CD4-positive, alpha-beta T cell (primary cell): ENCODE measurements at regions of chr4 and their contacts with region 1.

Region 1: DNA sequence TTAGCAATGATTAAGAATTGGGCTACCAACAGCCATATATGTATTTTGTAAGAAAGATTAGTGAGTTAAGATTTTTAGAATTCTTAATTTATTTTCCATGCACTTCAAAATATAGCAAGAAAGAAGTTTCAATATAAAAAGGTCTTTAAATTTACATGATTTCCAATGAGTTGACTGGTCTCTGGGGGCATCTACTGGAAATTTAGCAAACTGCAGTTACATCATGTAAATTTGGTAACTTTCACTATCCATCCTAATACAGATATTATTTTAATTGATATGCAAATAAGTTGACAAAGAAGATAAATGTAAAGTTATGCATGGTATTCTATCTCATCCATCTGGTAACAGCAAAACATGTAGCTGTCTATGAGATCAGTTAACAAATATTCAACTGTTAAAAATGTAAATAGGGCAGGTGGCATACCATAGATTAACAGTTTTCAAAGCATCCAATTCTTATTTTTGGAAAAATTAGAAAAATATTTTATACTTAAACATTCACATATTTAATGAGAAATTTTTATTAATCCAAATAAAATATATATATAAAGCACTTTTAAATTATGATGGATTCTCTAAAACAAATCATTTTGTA is 29.1 kb downstream of the TTC29 start:
- DNase-seq: peak in 4 of 14 experiments; percentile 7 to 48 (median 40)
- ATAC-seq: no peak
- H3K4me3 ChIP-seq: no peak overlapping the region
- H3K4me3 Mint-ChIP-seq: no peak overlapping the region
- H3K27ac ChIP-seq: no peak overlapping the region
- H3K27ac Mint-ChIP-seq: no peak overlapping the region
- H3K4me1 ChIP-seq: no peaks in the 10 kb centered on the region
- H3K4me1 Mint-ChIP-seq: no peaks in the 10 kb centered on the region
- H3K27me3 ChIP-seq: peaks cover 0 to 15% of the 10 kb centered on the region in 2 experiments
- H3K27me3 Mint-ChIP-seq: peaks cover 7% of the 10 kb centered on the region
- CTCF ChIP-seq: peak; percentile 45

Region 2: DNA sequence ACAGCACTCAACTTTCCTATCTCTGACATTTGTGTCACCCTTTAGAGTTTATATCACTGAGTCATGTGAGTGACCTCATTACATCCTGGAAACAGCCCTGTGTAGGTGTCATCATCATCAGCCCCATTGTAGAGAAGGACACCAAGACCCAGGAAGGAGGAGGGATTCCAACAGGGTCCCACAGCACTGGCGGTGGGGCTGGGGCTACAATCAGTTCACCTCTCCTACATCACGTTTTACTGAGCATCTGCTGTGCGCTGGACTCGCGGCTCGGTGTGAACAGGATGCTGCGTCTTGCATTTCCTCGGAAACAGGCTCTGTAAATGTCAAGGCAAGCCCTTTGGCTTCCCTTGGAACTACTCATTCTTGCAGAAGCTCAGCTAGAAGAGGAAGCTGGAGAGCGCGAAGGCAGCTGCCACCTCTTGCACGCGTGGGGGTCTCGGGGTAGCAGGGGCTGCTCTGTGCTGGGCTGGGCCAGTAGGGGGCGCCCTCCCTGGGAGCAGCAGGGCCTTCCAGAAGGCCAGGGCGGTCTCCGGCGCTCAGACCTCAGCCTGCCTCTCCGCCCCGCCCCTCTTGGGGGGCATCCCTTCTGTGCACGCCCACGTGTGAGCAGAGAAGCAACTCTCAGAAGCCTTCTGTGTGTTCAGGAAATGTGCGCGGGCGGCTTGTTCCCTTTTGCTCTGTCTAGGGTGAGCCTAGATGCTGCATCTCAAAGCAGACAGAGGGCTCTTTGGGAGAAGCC is 673.3 kb before region 1 on chr4:
- CTCF ChIA-PET with region 1: no interaction called
- POLR2A ChIA-PET with region 1: no interaction called
- intact Hi-C with region 1: loop called (anchors 1 to 2 kb)
- DNase-seq: peak in 11 of 14 experiments; percentile 13 to 60 (median 29)
- ATAC-seq: peak; percentile 66
- H3K4me3 ChIP-seq: peak overlapping the region; percentile 18
- H3K4me3 Mint-ChIP-seq: peak overlapping the region; percentile 56
- H3K27ac ChIP-seq: no peak overlapping the region
- H3K27ac Mint-ChIP-seq: no peak overlapping the region
- H3K4me1 ChIP-seq: peaks cover 14% of the 10 kb centered on the region
- H3K4me1 Mint-ChIP-seq: peaks cover 20% of the 10 kb centered on the region
- H3K27me3 ChIP-seq: no peaks in the 10 kb centered on the region
- H3K27me3 Mint-ChIP-seq: peaks cover 10% of the 10 kb centered on the region
- CTCF ChIP-seq: peak; percentile 49

Region 3: DNA sequence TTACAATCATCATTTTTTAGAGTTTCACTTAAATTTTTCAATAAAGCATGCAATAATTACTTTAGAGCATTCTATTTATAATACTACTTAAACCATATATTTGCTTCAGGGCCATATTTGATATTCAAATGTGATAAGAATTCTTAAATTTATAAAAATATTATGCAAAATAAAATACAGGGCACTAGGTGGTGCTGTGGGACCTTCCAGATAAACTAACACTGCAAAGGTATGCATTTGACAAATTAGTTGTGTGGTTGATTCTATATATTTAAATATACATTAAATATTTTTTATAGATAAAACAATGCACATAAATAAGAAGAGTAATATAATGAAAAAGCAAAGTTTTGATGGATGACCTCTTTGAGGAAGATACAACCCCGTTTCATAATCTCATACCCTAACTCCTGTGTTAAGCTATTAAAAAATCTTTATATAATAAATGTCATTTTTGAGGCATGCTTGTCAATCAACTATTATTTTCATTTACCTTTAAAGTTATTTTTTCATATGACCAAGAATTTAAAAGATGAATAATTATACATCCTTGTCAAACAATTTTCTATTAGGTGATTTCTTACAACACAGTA is 573.9 kb before region 1 on chr4:
- CTCF ChIA-PET with region 1: no interaction called
- POLR2A ChIA-PET with region 1: no interaction called
- intact Hi-C with region 1: loop called (anchors 1 to 5 kb)
- DNase-seq: peak in 8 of 14 experiments; percentile 0 to 59 (median 24)
- ATAC-seq: no peak
- H3K4me3 ChIP-seq: no peak overlapping the region
- H3K4me3 Mint-ChIP-seq: no peak overlapping the region
- H3K27ac ChIP-seq: no peak overlapping the region
- H3K27ac Mint-ChIP-seq: no peak overlapping the region
- H3K4me1 ChIP-seq: no peaks in the 10 kb centered on the region
- H3K4me1 Mint-ChIP-seq: peaks cover 5% of the 10 kb centered on the region
- H3K27me3 ChIP-seq: no peaks in the 10 kb centered on the region
- H3K27me3 Mint-ChIP-seq: no peaks in the 10 kb centered on the region
- CTCF ChIP-seq: peak; percentile 73

Region 4: GRCh38 chr4:146738596-146738995 is 178.0 kb before region 1 on chr4:
- CTCF ChIA-PET with region 1: no interaction called
- POLR2A ChIA-PET with region 1: no interaction called
- intact Hi-C with region 1: no loop called
- DNase-seq: no peak
- ATAC-seq: no peak
- H3K4me3 ChIP-seq: no peak overlapping the region
- H3K4me3 Mint-ChIP-seq: no peak overlapping the region
- H3K27ac ChIP-seq: no peak overlapping the region
- H3K27ac Mint-ChIP-seq: no peak overlapping the region
- H3K4me1 ChIP-seq: no peaks in the 10 kb centered on the region
- H3K4me1 Mint-ChIP-seq: no peaks in the 10 kb centered on the region
- H3K27me3 ChIP-seq: no peaks in the 10 kb centered on the region
- H3K27me3 Mint-ChIP-seq: peaks cover 1% of the 10 kb centered on the region
- CTCF ChIP-seq: no peak

Region 5: GRCh38 chr4:146932111-146932510 is 15.5 kb after region 1 on chr4:
- CTCF ChIA-PET with region 1: no interaction called
- POLR2A ChIA-PET with region 1: no interaction called
- intact Hi-C with region 1: no loop called
- DNase-seq: no peak
- ATAC-seq: no peak
- H3K4me3 ChIP-seq: no peak overlapping the region
- H3K4me3 Mint-ChIP-seq: no peak overlapping the region
- H3K27ac ChIP-seq: no peak overlapping the region
- H3K27ac Mint-ChIP-seq: no peak overlapping the region
- H3K4me1 ChIP-seq: no peaks in the 10 kb centered on the region
- H3K4me1 Mint-ChIP-seq: no peaks in the 10 kb centered on the region
- H3K27me3 ChIP-seq: peaks cover 0 to 7% of the 10 kb centered on the region in 2 experiments
- H3K27me3 Mint-ChIP-seq: peaks cover 16% of the 10 kb centered on the region
- CTCF ChIP-seq: no peak